GM12878 (cell line): ENCODE measurements at regions of chr17 and their contacts with region 1.

Region 1: DNA sequence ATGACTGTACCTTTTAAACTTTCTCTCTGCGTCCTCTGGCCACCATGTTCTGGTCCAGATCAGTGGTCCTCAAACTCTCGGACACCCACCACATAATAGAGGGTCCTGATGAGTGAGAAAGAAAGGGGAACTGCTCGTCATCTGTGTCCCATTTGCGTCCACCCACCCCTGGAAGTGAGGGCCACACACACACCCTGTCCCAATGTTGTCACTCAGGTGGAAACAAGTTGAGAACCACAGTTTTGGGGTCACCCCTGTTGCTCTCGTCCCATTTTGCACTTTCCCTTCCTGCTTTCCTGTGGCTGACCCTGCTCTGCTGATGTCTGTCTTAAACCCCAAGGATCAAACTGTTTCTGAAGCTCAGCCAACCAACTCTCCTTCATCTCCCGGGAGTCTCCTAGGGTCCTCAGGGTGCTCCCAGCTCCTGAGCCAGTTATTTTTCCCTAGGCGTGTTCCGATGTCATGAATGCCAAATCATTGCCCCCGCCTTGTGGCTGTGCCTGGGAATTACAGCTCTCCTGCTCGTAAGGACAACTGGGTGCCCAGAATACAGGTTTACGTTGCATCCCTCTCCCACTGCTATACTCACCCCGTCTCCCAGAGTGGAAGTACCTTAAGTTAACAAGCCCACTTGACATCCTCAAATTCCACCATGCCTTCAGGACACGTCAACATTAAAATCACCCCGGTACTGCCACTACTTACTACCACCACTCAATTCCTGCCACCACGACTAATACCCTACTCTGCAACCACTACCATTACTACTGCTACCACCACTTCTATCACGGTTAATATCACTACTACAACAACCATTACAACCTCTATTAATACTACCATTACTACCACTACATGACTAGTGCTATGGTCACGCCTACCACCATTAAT is 26.0 kb upstream of the HNF1B start:
- DNase-seq: no peak
- ATAC-seq: 0 out of 3 replicates have a peak, but pooled peaks have one; percentile 5
- H3K4me3 ChIP-seq: no peak overlapping the region
- H3K27ac ChIP-seq: no peak overlapping the region
- H3K4me1 ChIP-seq: peaks cover 55% of the 10 kb centered on the region
- H3K27me3 ChIP-seq: no peaks in the 10 kb centered on the region
- CTCF ChIP-seq: peak; percentile 63 to 79 (median 74)
- EP300 ChIP-seq: no peak; a peak in 1 of 4 replicates
- POLR2A ChIP-seq: no peak
- RAD21 ChIP-seq: peak; percentile 55

Region 2: GRCh38 chr17:37678036-37678435 is 92.8 kb before region 1 on chr17:
- CTCF ChIA-PET with region 1: no interaction called
- POLR2A ChIA-PET with region 1: no interaction called
- RAD21 ChIA-PET with region 1: no interaction called
- SMC1A ChIA-PET with region 1: no interaction called
- in situ Hi-C with region 1: no loop called
- intact Hi-C with region 1: no loop called
- DNase-seq: no peak
- ATAC-seq: no peak
- H3K4me3 ChIP-seq: no peak overlapping the region
- H3K27ac ChIP-seq: no peak overlapping the region
- H3K4me1 ChIP-seq: no peaks in the 10 kb centered on the region
- H3K27me3 ChIP-seq: no peaks in the 10 kb centered on the region; a peak in 1 of 4 replicates
- CTCF ChIP-seq: no peak
- EP300 ChIP-seq: no peak
- POLR2A ChIP-seq: no peak
- RAD21 ChIP-seq: no peak

Region 3: DNA sequence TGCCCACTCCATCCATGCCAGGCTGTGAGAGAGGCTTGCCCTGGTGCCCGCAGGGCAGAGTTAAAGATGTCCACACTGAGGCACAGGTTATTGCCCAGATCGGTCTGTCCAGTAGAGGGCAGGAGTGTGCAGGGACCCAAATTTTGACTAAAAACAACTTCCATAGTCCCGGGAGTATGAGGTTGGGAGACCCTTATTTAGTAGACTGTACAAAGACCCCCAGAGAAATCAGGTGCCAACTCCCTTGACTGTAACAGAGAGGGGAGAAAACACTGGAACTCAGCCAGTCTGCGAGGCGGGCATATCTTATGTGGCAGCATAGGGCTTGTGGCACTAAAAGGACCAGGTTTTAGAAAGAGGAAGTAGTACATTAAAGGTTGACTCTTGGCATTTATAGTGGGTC is 69.4 kb before region 1 on chr17:
- CTCF ChIA-PET with region 1: interaction called, 79 read pairs
- POLR2A ChIA-PET with region 1: interaction called, 3 read pairs
- RAD21 ChIA-PET with region 1: interaction called, 29 read pairs
- SMC1A ChIA-PET with region 1: interaction called, 31 read pairs
- in situ Hi-C with region 1: no loop called
- intact Hi-C with region 1: loop called (anchors 5 kb)
- DNase-seq: peak; percentile 16
- ATAC-seq: peak; percentile 93
- H3K4me3 ChIP-seq: no peak overlapping the region
- H3K27ac ChIP-seq: no peak overlapping the region
- H3K4me1 ChIP-seq: no peaks in the 10 kb centered on the region
- H3K27me3 ChIP-seq: no peaks in the 10 kb centered on the region
- CTCF ChIP-seq: peak; percentile 78 to 81 (median 80)
- EP300 ChIP-seq: no peak
- POLR2A ChIP-seq: no peak
- RAD21 ChIP-seq: peak; percentile 75

Region 4: DNA sequence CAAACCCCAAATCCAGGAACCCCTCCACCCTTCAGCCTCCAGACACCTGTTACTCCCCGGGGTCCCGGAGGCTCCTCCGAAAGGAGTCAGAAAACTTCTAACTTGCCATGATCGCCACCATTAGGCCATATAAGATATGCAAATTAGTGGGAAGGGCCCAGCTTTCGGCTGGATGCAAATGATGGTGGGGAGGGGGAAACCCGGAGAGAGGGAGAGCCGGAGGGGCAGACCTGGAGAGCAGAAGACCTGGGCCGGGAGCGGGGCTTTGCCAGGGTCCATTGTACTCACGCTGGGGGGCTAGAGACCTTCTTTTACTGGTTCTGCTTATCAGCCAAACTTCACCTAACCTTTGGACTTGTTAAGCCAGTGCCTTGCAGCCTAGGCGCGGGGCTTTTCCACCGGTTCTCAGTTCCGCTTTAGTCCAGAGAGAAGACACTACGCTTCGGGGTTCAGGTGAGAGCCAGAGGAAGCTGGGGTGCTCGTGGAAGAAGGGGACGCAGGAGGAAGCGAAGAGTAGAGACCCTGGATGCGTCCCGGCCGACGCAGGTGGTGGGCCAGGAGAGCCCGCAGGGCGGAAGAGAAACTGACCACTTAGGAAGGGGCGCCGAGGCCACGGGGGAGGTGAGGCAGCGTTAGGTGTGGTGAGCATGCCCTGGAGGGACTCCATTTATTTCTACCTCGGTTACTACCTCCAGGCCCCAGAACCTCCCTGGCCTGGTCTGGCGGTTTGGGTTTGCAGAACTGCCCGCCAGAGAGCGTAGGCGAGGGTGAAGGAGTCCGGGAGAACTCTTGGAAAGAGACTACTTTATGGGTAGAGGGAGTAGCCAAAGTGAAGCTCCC is 25.7 kb before region 1 on chr17 and contains the start of gene HNF1B:
- CTCF ChIA-PET with region 1: interaction called, 58 read pairs
- POLR2A ChIA-PET with region 1: interaction called, 44 read pairs
- RAD21 ChIA-PET with region 1: interaction called, 41 read pairs
- SMC1A ChIA-PET with region 1: interaction called, 167 read pairs
- in situ Hi-C with region 1: no loop called
- intact Hi-C with region 1: loop called (anchors 2 kb)
- DNase-seq: no peak
- ATAC-seq: peak; percentile 66
- H3K4me3 ChIP-seq: peak within 1 kb of the TSS; percentile 38; the same call in 1 of the 2 replicates
- H3K27ac ChIP-seq: peak within 1 kb of the TSS; percentile 56
- H3K4me1 ChIP-seq: peaks cover 42% of the 10 kb centered on the region
- H3K27me3 ChIP-seq: peaks cover 0 to 22% of the 10 kb centered on the region in 2 experiments; a peak in 2 of 4 replicates
- CTCF ChIP-seq: no peak
- EP300 ChIP-seq: peak in 1 of 2 experiments; percentile 88; a peak in 2 of 4 replicates
- POLR2A ChIP-seq: peak; percentile 36; the same call in 1 of the 2 replicates
- RAD21 ChIP-seq: no peak
- polyA plus RNA-seq, gene HNF1B: 0.51 to 0.93 TPM

Region 5: DNA sequence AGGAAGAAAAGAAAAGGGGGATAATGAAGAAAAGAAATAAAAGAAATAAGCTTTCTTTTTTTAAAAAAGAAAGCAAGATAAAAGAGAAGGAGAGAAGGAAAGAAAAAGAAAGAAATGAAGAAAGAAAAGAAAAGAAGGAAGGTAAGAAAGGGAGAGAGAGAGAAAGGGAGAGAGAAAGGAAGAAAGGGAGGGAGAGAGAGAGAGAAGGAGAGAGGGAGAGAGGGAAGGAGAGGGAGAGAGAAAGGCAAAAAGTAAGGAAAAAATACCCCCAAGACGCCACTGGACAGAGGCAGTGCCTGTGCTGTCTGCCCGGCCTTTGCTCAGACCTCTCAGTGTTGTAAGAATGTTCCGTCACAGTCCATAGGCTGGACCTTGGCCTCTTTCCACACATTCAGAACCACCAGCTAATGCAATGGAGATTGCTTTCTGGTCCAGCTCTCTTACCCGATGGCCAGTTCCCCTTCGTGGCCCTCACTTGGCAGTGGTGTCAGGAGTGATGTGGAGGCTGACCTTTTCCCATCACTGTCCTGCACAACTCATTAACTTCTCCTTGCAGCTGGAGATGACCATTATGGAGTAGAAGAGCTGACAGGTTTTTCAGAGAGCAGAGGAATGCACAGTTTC is 11.7 kb before region 1 on chr17:
- CTCF ChIA-PET with region 1: interaction called, 16 read pairs
- POLR2A ChIA-PET with region 1: interaction called, 4 read pairs
- RAD21 ChIA-PET with region 1: interaction called, 4 read pairs
- SMC1A ChIA-PET with region 1: interaction called, 21 read pairs
- in situ Hi-C with region 1: no loop called
- intact Hi-C with region 1: no loop called
- DNase-seq: no peak
- ATAC-seq: no peak
- H3K4me3 ChIP-seq: no peak overlapping the region
- H3K27ac ChIP-seq: no peak overlapping the region
- H3K4me1 ChIP-seq: peaks cover 9% of the 10 kb centered on the region; the same call in 1 of the 2 replicates
- H3K27me3 ChIP-seq: no peaks in the 10 kb centered on the region; a peak in 1 of 4 replicates
- CTCF ChIP-seq: no peak
- EP300 ChIP-seq: no peak
- POLR2A ChIP-seq: no peak
- RAD21 ChIP-seq: no peak

Region 6: DNA sequence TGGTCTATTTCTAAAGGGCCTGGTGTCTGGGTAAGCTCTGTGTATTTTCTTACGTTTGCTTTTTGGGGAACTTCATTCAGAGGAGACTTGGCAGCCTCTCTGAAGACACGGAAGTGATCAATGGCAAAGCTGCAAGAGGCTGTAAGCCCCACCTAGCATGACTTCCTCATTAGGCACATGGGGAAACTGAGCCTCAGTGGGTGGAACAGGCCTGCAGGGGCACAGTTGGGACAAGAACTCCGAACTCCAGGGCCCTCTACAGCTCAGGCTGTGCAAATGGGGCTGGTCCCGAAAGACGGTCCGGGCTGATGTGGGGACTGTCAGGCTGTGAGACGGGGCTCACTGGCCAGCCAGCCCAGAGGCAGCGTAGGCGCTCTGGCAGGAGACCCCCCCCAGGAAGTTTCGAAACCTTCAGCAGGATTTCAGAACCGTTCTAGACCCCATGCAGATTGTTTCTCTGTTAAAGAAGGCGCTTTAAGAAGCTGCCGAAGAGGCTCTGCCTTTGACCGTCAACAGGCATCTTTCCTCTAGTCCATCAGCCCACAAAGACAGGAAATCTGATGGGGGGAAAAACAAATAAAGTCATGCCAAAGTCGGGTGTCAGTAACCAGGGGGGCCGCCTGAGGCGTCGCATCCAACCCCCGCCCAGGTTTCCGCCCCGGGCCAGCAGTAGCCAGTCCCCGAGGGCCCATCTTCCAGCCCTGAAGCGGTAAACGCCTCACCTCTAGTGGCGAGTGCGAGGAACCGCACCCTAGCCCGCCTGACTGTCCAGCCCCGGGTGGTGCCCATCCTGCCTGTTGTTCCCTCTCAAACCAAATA is 73.5 kb after region 1 on chr17:
- CTCF ChIA-PET with region 1: interaction called, 6 read pairs
- POLR2A ChIA-PET with region 1: interaction called, 3 read pairs
- RAD21 ChIA-PET with region 1: no interaction called
- SMC1A ChIA-PET with region 1: no interaction called
- in situ Hi-C with region 1: no loop called
- intact Hi-C with region 1: loop called (anchors 1 kb)
- DNase-seq: no peak
- ATAC-seq: peak; percentile 84
- H3K4me3 ChIP-seq: no peak overlapping the region
- H3K27ac ChIP-seq: no peak overlapping the region
- H3K4me1 ChIP-seq: peaks cover 28% of the 10 kb centered on the region
- H3K27me3 ChIP-seq: no peaks in the 10 kb centered on the region
- CTCF ChIP-seq: peak; percentile 69 to 90 (median 88)
- EP300 ChIP-seq: no peak
- POLR2A ChIP-seq: 0 out of 2 replicates have a peak, but pooled peaks have one; percentile 26
- RAD21 ChIP-seq: peak; percentile 85